T-cell (primary cell): ENCODE measurements at regions of chr22 and their contacts with region 1.

Region 1: DNA sequence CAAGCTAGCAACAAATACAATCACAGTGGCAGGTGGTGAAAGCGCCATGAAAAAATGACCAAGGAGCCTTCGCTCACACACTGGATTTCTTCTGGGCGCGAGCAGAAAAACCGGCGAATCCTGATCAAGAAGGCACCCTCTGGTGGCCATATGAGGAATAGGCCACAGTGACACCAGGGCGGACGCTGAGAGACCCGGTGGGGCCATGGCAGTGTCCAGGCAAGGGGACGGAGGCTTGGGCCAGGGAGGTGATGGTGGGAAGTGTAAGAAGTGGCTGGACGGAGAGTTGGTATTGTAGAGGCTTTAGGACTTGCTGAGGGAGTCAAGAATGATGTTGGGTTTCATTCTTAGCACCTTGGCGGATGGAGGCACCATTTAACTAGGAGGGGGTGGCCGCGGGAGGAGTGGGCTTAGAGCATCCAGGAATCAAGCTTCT is 16.9 kb upstream of the RAC2 start:
- DNase-seq: peak in 30 of 35 experiments; percentile 31 to 79 (median 53)
- ATAC-seq: peak; percentile 70 to 81 (median 76)
- H3K4me3 ChIP-seq: no peak overlapping the region
- H3K4me3 Mint-ChIP-seq: peak overlapping the region in 1 of 3 donors; percentile 5
- H3K27ac ChIP-seq: no peak overlapping the region
- H3K27ac Mint-ChIP-seq: peak overlapping the region; percentile 50 to 53
- H3K4me1 ChIP-seq: peaks cover 2 to 24% of the 10 kb centered on the region in 2 experiments
- H3K4me1 Mint-ChIP-seq: peaks cover 18 to 25% (median 18%) of the 10 kb centered on the region in 3 donors
- H3K27me3 ChIP-seq: peaks cover 0 to 3% of the 10 kb centered on the region in 2 experiments
- H3K27me3 Mint-ChIP-seq: peaks cover 0 to 1% of the 10 kb centered on the region in 2 donors

Region 2: DNA sequence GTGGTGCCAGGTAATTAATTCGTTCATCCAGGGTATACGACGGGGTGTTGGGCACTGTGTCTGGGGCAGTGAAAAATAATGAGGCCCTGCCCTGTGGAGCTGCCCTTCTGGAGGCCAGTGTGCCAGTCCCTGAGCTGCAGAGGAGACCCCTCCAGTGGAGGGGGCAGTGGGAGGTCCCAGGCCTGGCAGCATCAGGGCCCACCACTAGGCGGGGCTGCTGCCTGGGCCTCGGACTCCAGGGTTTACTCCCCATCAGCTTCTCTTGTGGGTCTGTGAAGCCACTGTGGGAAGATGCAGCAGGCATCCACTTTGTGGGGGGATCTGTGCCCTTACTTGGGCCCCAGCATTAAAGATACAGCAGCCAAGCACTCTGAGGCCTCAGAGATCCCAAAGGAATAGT is 134.0 kb before region 1 on chr22:
- CTCF ChIA-PET with region 1: no interaction called
- POLR2A ChIA-PET with region 1: no interaction called
- DNase-seq: peak in 3 of 35 experiments; percentile 23 to 49 (median 31)
- ATAC-seq: no peak
- H3K4me3 ChIP-seq: no peak overlapping the region
- H3K4me3 Mint-ChIP-seq: no peak overlapping the region
- H3K27ac ChIP-seq: no peak overlapping the region
- H3K27ac Mint-ChIP-seq: peak overlapping the region; percentile 69 to 74
- H3K4me1 ChIP-seq: peaks cover 7 to 22% of the 10 kb centered on the region in 2 experiments
- H3K4me1 Mint-ChIP-seq: peaks cover 34 to 42% (median 41%) of the 10 kb centered on the region in 3 donors
- H3K27me3 ChIP-seq: no peaks in the 10 kb centered on the region
- H3K27me3 Mint-ChIP-seq: no peaks in the 10 kb centered on the region

Region 3: DNA sequence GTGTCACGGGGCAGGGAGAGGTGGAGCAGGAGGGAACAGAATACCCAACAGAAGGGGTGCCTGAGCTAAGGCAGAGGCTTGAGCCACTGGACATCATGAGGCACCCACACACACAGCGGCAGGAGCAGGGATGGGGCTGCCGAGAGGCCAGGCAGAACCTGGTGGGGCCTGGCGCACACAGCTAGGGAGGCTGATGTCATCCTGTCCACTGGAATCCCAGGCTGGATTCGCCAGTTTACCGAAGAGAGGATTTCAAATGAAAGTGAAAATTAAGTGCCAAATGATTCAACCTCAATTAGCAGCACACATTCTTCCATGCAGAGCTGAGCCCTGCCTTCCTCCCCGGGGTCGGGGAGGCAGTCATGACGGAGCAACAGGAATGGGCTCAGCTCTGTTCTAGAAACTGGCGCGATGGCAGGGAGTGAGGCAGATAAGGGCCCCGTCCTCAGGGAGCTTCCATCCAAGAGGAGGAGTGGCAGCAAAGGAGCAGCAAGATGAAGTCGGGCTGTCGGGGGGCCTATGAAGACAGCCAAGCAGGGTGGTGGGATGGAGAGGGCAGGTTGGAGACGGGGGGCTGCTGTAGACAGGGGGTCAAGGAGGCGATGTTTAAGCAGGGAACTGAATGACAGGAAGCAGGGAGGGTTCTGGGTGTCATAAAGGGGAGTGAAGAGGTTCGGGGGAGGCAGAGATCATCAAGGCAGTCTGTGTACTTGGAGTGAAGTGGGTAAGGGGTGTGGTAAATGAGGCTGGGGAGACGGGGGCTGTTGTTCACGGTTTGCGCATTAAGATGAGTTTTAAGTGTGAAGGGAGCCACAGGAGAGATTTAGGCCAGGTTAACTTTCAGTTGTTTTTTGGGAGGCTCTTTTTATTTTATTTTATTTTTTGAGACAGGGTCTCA is 23.3 kb before region 1 on chr22:
- CTCF ChIA-PET with region 1: interaction called, 8 to 63 read pairs
- POLR2A ChIA-PET with region 1: interaction called in 1 of 2 experiments, 3 read pairs
- DNase-seq: peak in 4 of 35 experiments; percentile 23 to 59 (median 49)
- ATAC-seq: peak in 1 of 4 experiments; percentile 13
- H3K4me3 ChIP-seq: peak overlapping the region; percentile 35 to 38
- H3K4me3 Mint-ChIP-seq: peak overlapping the region; percentile 80 to 97 (median 82)
- H3K27ac ChIP-seq: peak overlapping the region; percentile 88
- H3K27ac Mint-ChIP-seq: peak overlapping the region; percentile 99
- H3K4me1 ChIP-seq: peaks cover 75 to 100% of the 10 kb centered on the region in 2 experiments
- H3K4me1 Mint-ChIP-seq: peaks cover 96 to 100% (median 98%) of the 10 kb centered on the region in 3 donors
- H3K27me3 ChIP-seq: no peaks in the 10 kb centered on the region
- H3K27me3 Mint-ChIP-seq: no peaks in the 10 kb centered on the region